ENCODE measurements at regions of chr2 and their contacts with region 1.

Region 1: DNA sequence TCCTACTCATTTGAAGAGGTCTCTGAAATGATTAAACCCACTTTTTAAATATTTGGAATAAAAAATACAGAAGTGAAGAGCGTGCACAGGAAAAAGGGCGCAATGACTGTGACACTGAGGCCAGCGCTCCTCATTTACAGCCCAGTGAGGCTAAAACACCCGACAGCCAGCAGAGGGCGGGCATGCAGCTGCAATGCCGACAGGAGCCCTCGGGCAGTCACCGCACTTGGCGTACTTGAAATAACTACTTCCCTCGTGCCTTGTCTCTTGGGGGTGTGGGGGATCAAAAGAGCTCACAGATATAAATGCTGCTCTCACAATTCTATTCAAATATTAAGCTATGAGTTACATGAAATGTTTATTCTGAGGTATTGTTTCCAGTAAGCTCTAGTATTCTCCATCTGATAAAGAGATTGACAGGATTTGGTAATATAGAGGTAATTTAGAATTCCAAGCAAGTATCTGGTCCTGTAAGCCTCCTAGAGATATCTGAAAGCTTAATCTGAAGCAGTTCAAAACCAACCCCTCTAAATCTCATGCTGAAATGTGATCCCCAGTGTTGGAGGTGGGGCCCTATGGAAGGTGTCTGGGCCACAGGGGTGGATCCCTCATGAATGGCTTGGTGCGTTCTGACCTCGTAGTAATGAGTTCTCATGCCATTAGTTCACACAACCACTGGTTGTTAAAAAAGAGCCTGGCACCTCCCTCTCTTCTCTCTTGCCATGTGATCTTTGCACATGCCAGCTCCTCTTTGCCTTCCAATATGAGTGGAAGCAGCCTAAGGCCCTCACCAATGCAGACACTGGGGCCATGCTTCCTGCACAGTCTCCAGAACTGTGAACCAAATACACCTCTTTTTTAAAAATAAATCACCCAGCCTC is 93.6 kb downstream of the ZAP70 start:
- DNase-seq: peak; percentile 79
- H3K4me3 ChIP-seq: no peak overlapping the region
- H3K27ac ChIP-seq: no peak overlapping the region
- H3K4me1 ChIP-seq: peaks cover 5% of the 10 kb centered on the region
- CTCF ChIP-seq: peak; percentile 96

Region 2: DNA sequence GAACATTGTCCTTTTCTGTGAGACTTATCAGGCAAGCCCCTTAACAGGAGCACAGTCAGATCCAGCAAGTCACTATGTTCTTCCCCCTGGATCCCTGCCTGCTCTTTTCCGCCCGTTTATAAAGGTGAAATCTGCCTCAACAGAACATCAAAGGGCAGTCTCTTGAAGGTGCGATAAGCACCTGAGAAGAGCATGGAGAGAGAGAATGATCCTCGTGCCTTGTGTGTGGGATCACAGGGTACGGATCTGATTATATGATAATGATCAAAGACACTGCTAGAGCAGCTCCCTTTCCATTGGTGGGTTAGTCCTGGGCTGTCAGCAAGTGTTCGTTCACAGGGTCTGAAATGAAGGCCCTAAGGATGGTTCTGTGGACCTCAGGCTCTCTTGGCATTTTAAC is 12.8 kb after region 1 on chr2:
- CTCF ChIA-PET with region 1: no interaction called
- POLR2A ChIA-PET with region 1: no interaction called
- intact Hi-C with region 1: no loop called
- DNase-seq: no peak
- H3K4me3 ChIP-seq: no peak overlapping the region
- H3K27ac ChIP-seq: no peak overlapping the region
- H3K4me1 ChIP-seq: no peaks in the 10 kb centered on the region
- CTCF ChIP-seq: no peak

Region 3: DNA sequence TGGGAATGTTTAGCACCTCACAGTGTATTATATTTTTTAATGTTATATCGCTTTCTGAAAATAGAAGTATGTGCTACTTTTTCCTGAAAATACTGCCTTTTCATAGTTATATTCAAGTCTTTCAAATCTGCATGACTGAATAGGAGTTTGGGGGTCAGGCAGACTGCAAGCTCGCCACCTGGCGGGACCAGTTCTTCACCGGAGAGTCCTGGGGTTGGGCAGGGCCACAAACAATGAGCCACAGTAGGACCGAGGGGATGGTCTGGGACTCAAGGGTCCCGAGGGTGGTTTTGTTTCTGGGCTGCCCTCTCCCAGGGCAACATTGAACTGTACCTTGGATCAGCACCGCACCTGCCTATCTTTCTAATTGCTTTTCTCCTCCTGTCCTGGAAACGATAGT is 350.6 kb after region 1 on chr2:
- CTCF ChIA-PET with region 1: no interaction called
- POLR2A ChIA-PET with region 1: no interaction called
- intact Hi-C with region 1: loop called (anchors 1 kb)
- DNase-seq: peak; percentile 59
- H3K4me3 ChIP-seq: no peak overlapping the region
- H3K27ac ChIP-seq: no peak overlapping the region
- H3K4me1 ChIP-seq: no peaks in the 10 kb centered on the region
- CTCF ChIP-seq: peak; percentile 73

Region 4: DNA sequence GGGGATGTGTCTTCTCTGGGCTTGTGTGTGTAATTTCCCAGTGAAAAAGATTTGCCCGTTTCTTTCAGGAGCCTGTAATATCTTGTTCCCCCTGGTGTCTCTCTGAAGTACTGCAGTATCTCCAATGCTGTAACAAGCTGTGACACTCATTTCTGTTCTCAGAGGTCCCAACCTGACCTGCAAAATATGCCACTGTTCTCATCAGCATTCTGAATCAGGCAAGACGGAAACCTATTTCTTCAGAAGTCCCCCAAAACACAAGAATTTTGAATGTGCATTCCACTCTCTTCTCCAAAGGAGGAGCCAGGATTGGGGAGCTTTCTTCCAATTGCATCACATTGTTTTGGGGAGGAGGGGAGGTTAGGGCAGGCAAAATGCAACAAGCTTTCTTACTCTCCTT is 462.3 kb after region 1 on chr2:
- CTCF ChIA-PET with region 1: interaction called, 3 read pairs
- POLR2A ChIA-PET with region 1: no interaction called
- intact Hi-C with region 1: loop called (anchors 1 kb)
- DNase-seq: peak; percentile 62
- H3K4me3 ChIP-seq: no peak overlapping the region
- H3K27ac ChIP-seq: no peak overlapping the region
- H3K4me1 ChIP-seq: no peaks in the 10 kb centered on the region
- CTCF ChIP-seq: peak; percentile 84

Region 5: DNA sequence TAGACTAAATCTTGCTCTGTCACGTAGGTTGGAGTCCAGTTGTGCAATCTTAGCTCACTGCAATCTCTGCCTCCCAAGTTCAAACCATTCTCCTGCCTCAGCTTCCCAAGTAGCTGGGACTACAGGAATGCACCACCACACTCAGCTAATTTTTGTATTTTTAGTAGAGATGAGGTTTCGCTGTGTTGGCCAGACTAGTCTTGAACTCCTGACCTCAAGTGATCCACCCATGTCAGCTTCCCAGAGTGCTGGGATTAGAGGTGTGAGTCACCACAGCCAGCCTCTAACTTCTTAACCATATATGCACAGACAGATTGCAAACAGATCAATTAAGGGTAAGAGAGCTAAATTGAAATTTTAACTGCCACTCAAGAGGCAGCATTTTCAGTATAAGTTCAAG is 517.2 kb after region 1 on chr2:
- CTCF ChIA-PET with region 1: no interaction called
- POLR2A ChIA-PET with region 1: no interaction called
- intact Hi-C with region 1: no loop called
- DNase-seq: no peak
- H3K4me3 ChIP-seq: no peak overlapping the region
- H3K27ac ChIP-seq: no peak overlapping the region
- H3K4me1 ChIP-seq: no peaks in the 10 kb centered on the region
- CTCF ChIP-seq: no peak

Measured in OCI-LY7 (cell line).